Naive thymus-derived CD4-positive, alpha-beta T cell (primary cell): ENCODE measurements at regions of chr3 and their contacts with region 1.

Region 1: DNA sequence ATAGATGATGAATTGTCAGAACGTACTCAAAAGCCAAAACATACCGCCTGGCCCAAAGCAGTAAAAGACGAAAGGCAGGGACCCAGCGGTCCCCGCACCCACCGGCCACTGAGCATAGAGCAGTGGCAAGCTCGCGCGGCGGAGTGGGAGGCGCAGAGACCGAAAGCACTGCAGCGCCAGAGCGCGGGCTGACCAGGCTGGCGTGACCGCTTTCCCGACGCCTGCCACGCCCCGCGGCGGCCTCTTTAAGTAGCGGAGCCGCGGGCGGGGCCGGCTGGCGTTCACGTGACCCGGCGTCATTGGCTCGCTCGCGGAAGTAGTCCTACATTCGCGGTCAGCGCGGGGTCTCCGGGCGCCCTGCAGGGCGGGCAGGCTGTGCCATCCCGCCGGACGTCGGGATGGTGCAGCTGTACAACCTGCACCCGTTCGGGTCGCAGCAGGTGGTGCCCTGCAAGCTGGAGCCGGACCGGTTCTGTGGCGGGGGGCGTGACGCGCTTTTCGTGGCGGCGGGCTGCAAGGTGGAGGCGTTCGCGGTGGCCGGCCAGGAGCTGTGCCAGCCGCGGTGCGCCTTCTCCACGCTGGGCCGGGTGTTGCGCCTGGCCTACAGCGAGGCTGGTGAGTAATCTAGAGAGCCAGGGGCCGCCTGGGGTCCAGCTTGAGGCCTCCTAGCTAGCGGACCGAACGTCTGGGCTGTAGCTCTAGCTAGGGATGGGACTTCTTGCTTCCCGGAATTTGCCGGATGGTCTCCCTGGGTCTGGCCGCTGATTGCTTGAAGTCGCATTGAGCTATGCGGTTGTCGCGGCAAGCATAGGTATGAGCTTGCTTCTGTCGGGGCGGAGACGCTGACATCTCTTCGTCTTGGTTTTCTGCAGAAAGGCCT is at the start of gene HPS3:
- DNase-seq: peak; percentile 62 to 87 (median 71)
- ATAC-seq: peak; percentile 94
- H3K4me3 ChIP-seq: peak within 1 kb of the TSS; percentile 96
- H3K4me3 Mint-ChIP-seq: peak within 1 kb of the TSS; percentile 92 to 99 (median 96)
- H3K27ac ChIP-seq: peak within 1 kb of the TSS; percentile 70
- H3K27ac Mint-ChIP-seq: peak within 1 kb of the TSS; percentile 84 to 96 (median 90)
- H3K4me1 ChIP-seq: peaks cover 25 to 27% of the 10 kb centered on the region in 2 donors
- H3K4me1 Mint-ChIP-seq: peaks cover 20 to 53% (median 47%) of the 10 kb centered on the region in 7 donors
- H3K27me3 ChIP-seq: no peaks in the 10 kb centered on the region
- H3K27me3 Mint-ChIP-seq: peaks cover 0 to 24% (median 8%) of the 10 kb centered on the region in 5 donors
- total RNA-seq, gene HPS3: 13.6 to 25.8 (median 23.4) TPM

Region 2: DNA sequence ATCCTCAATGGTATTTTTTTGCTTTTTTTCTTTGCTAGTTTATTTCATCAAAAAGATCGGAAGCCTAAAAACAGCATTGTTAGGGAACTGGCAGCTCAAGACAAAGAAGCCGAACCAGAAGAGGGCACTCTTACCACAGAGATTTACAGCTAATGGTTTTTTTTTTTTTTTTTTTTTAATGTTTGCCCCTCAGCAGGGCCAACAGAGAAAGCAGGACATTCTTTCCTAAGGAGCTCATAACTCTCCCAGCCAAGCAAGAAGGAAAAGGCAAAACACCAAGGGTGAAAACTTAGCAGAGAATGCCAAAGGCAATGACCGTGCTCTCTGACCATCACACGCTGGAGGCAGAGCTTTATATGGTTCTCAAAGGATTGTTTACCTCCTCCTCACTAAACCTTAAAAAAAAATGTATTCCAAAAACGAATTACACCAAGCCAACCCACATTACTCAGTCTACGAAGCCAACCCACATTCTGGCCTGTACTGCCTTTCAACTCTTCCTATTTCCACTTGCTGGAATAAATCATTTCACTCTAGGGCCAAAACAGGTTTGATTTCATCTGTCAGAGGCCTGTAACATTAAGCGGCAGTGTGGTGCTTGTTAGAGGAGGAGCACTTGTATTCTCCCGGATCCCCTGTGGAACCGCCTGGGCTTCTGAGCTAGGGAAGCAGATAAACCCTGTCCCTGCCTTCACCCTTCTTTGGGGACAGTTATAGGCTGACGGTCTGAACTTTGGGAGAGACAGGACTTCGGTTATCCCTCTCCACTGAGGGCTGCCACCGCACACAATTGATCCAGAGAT is 173.8 kb before region 1 on chr3:
- CTCF ChIA-PET with region 1: no interaction called
- POLR2A ChIA-PET with region 1: no interaction called
- intact Hi-C with region 1: loop called in 1 of 2 experiments (anchors 2 kb)
- DNase-seq: peak in 4 of 9 donors; percentile 13 to 41 (median 32)
- ATAC-seq: peak; percentile 41
- H3K4me3 ChIP-seq: no peak overlapping the region
- H3K4me3 Mint-ChIP-seq: no peak overlapping the region
- H3K27ac ChIP-seq: no peak overlapping the region
- H3K27ac Mint-ChIP-seq: no peak overlapping the region
- H3K4me1 ChIP-seq: no peaks in the 10 kb centered on the region
- H3K4me1 Mint-ChIP-seq: peaks cover 0 to 13% (median 6%) of the 10 kb centered on the region in 7 donors
- H3K27me3 ChIP-seq: no peaks in the 10 kb centered on the region
- H3K27me3 Mint-ChIP-seq: peaks cover 0 to 17% (median 0%) of the 10 kb centered on the region in 5 donors

Region 3: GRCh38 chr3:149145974-149146373 is 16.4 kb after region 1 on chr3:
- CTCF ChIA-PET with region 1: interaction called, 3 read pairs
- POLR2A ChIA-PET with region 1: interaction called, 6 read pairs
- intact Hi-C with region 1: loop called in 1 of 2 experiments (anchors 2 kb)
- DNase-seq: peak in 5 of 9 donors; percentile 7 to 33 (median 12)
- ATAC-seq: peak; percentile 91
- H3K4me3 ChIP-seq: no peak overlapping the region
- H3K4me3 Mint-ChIP-seq: no peak overlapping the region
- H3K27ac ChIP-seq: no peak overlapping the region
- H3K27ac Mint-ChIP-seq: no peak overlapping the region
- H3K4me1 ChIP-seq: peaks cover 10 to 14% of the 10 kb centered on the region in 2 donors
- H3K4me1 Mint-ChIP-seq: peaks cover 6 to 15% (median 11%) of the 10 kb centered on the region in 7 donors
- H3K27me3 ChIP-seq: no peaks in the 10 kb centered on the region
- H3K27me3 Mint-ChIP-seq: no peaks in the 10 kb centered on the region

Region 4: DNA sequence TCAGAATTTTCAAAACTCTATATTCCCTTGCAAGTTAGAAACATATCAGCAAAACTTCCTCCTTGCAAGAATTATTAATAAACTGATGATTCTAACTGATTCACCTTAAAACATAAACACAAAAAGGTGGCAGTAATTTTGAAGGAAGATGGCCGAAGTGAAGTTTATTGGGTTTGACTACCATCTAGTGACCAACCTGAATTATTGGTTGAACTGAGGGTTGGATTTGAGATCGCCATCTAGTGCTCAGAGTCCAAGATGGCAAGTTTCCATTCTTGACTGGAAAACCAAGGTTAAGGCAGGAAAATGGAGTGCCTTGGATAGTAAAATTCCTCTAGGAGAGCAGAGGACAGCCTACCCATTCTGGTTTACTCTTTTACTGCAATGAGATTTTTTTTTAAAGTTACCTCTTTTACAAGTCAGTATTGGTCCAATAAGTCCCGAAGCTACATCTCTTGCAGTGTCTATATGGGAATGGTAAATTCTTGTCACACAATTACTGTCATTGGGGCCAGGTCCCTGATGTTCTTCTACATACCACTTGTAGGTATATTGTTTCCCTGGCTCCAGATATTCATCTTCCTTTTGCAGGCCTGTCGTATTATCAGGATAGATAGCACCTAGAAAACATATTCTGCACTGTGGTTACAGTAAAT is 143.7 kb after region 1 on chr3:
- CTCF ChIA-PET with region 1: interaction called, 5 read pairs
- POLR2A ChIA-PET with region 1: interaction called, 8 read pairs
- intact Hi-C with region 1: loop called (anchors 2 kb)
- DNase-seq: peak in 7 of 9 donors; percentile 19 to 67 (median 52)
- ATAC-seq: peak; percentile 92
- H3K4me3 ChIP-seq: no peak overlapping the region
- H3K4me3 Mint-ChIP-seq: no peak overlapping the region
- H3K27ac ChIP-seq: no peak overlapping the region
- H3K27ac Mint-ChIP-seq: no peak overlapping the region
- H3K4me1 ChIP-seq: peaks cover 4 to 13% of the 10 kb centered on the region in 2 donors
- H3K4me1 Mint-ChIP-seq: peaks cover 6 to 14% (median 13%) of the 10 kb centered on the region in 7 donors
- H3K27me3 ChIP-seq: no peaks in the 10 kb centered on the region
- H3K27me3 Mint-ChIP-seq: peaks cover 0 to 15% (median 0%) of the 10 kb centered on the region in 5 donors

Region 5: DNA sequence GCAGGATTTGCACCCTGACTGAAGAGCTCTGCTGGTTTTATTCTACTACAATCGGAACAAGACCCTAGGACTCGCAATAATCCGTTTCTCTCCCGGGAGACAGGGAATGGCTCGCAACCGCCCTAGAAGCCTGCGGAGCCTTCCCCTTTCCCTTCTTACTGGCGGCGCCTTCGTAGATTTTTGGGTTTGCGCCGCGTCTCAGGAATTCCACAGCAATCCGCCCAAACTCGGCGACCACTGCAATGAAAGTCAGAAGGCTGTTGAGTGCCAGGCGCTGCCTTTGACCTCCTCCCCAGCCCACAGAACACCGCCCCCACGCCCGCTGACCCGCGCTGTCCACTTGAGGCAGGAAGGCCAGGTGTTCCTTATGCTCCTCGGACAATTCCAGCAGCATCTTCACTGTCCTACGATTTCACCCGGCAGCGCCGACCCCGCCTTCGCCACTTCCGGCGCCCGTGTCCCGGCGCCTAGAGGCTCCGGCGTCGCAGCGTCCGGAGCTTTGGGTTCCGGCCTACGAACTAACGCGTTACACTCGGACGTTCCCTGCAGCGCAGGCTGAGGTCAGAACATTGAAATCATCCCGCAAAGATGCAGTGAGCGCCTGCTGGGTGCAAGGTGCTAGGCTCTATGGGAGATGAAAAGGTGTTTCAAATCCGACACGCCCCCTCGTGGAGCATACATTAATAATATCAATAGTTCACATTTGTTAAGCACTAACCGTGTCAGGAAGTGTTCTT is 622.7 kb after region 1 on chr3 and contains the start of gene COMMD2:
- CTCF ChIA-PET with region 1: no interaction called
- POLR2A ChIA-PET with region 1: interaction called, 6 read pairs
- intact Hi-C with region 1: loop called in 1 of 2 experiments (anchors 1 kb)
- DNase-seq: peak; percentile 52 to 76 (median 63)
- ATAC-seq: peak; percentile 91
- H3K4me3 ChIP-seq: peak within 1 kb of the TSS; percentile 81
- H3K4me3 Mint-ChIP-seq: peak within 1 kb of the TSS; percentile 94 to 98 (median 96)
- H3K27ac ChIP-seq: peak within 1 kb of the TSS; percentile 73
- H3K27ac Mint-ChIP-seq: peak within 1 kb of the TSS; percentile 90 to 97 (median 96)
- H3K4me1 ChIP-seq: peaks cover 9 to 20% of the 10 kb centered on the region in 2 donors
- H3K4me1 Mint-ChIP-seq: peaks cover 12 to 56% (median 32%) of the 10 kb centered on the region in 7 donors
- H3K27me3 ChIP-seq: no peaks in the 10 kb centered on the region
- H3K27me3 Mint-ChIP-seq: peaks cover 0 to 2% (median 0%) of the 10 kb centered on the region in 5 donors
- total RNA-seq, gene COMMD2: 29.9 to 44.4 (median 33.4) TPM